A673 (cell line): ENCODE measurements at regions of chr9 and their contacts with region 1.

Region 1: GRCh38 chr9:112421771-112422222 is 41.9 kb downstream of the HSDL2 start:
- DNase-seq: no peak
- H3K4me3 ChIP-seq: no peak overlapping the region
- H3K27ac ChIP-seq: no peak overlapping the region
- H3K4me1 ChIP-seq: no peaks in the 10 kb centered on the region
- H3K27me3 ChIP-seq: no peaks in the 10 kb centered on the region
- CTCF ChIP-seq: no peak

Region 2: GRCh38 chr9:112188884-112189704 is 232.7 kb before region 1 on chr9:
- CTCF ChIA-PET with region 1: interaction called, 10 read pairs
- POLR2A ChIA-PET with region 1: no interaction called
- intact Hi-C with region 1: no loop called
- DNase-seq: no peak
- H3K4me3 ChIP-seq: no peak overlapping the region
- H3K27ac ChIP-seq: no peak overlapping the region
- H3K4me1 ChIP-seq: no peaks in the 10 kb centered on the region
- H3K27me3 ChIP-seq: no peaks in the 10 kb centered on the region
- CTCF ChIP-seq: no peak

Region 3: DNA sequence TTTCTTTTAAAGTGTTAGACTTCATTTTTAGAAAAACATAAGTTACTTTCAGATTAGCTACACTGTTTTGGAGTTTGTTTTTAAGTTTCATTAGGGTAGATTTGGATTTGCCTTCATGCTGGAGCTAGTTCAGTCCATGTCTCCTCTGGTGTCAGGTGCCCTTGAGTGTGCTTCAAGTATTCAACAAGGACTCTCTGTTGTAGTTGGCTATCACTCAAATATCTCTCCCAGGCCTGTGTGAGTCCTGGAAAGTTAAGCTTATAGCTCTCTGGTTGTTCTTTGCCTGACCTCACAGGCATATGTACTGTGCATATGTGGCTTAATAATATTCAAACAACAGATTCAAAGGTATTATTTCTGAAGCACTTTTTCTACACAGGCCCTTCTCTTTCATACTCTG is 133.8 kb before region 1 on chr9:
- CTCF ChIA-PET with region 1: no interaction called
- POLR2A ChIA-PET with region 1: no interaction called
- intact Hi-C with region 1: no loop called
- DNase-seq: no peak
- H3K4me3 ChIP-seq: no peak overlapping the region
- H3K27ac ChIP-seq: no peak overlapping the region
- H3K4me1 ChIP-seq: no peaks in the 10 kb centered on the region
- H3K27me3 ChIP-seq: no peaks in the 10 kb centered on the region
- CTCF ChIP-seq: no peak